Activated B cell treated with CpG ODN at 0.5 μM for 24 hours (primary cell): ENCODE measurements at regions of chr14 and their contacts with region 1.

Region 1: DNA sequence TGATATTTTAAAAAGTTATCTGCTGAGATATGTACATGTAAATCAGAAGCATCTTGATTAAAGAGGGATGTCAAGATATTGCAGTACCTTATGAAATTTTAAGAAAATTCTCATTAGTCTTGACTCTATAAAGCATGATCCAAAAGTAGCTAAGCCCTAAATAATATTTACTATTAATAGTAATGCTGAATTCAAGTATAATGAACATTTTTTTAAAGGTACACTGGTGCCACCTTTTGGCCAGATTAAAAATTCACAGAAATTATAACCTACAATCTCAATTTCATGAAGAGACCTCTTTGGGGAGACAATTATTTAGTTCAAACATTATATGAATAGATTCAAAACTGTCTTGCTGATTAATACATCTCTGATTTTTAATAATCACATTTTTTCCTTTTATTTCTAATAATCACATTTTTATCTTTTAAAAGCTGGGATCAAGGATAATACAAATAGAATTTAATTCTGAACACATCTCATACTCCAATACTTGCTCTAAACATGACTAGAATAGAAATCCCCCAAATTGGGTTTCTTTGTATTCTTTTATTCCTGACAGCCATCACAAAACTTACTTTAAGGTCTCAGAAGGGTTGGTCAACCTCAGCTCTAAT is 13.4 kb downstream of the AKAP5 start:
- DNase-seq: no peak
- ATAC-seq: no peak
- H3K4me3 Mint-ChIP-seq: no peak overlapping the region
- H3K27ac Mint-ChIP-seq: no peak overlapping the region
- H3K4me1 Mint-ChIP-seq: peaks cover 4% of the 10 kb centered on the region
- H3K27me3 Mint-ChIP-seq: no peaks in the 10 kb centered on the region
- CTCF ChIP-seq: peak; percentile 23

Region 2: GRCh38 chr14:64159588-64159987 is 319.2 kb before region 1 on chr14:
- CTCF ChIA-PET with region 1: no interaction called
- POLR2A ChIA-PET with region 1: no interaction called
- intact Hi-C with region 1: loop called (anchors 10 kb)
- DNase-seq: no peak
- ATAC-seq: peak; percentile 47
- H3K4me3 Mint-ChIP-seq: no peak overlapping the region
- H3K27ac Mint-ChIP-seq: no peak overlapping the region
- H3K4me1 Mint-ChIP-seq: peaks cover 6% of the 10 kb centered on the region
- H3K27me3 Mint-ChIP-seq: no peaks in the 10 kb centered on the region
- CTCF ChIP-seq: no peak

Region 3: DNA sequence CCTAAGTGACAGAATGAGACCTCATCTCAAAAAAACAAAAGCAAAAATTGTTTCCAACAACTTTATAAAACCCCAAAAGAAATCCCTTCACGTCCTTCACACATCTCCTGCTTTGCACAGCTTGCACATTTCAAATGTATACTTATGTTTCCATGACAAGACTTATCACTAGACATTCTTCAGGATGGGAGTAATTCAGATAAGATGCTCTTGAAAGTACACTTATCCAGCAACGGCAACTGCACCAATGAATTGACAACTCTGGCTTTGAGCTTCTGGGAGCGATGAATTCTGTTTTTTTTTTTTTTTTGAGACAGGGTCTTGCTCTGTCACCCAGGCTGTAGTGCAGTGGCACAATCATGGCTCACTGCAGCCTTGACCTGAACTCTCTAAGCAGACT is 44.2 kb before region 1 on chr14:
- CTCF ChIA-PET with region 1: interaction called, 148 read pairs
- POLR2A ChIA-PET with region 1: no interaction called
- intact Hi-C with region 1: loop called (anchors 1 kb)
- DNase-seq: no peak
- ATAC-seq: no peak
- H3K4me3 Mint-ChIP-seq: no peak overlapping the region
- H3K27ac Mint-ChIP-seq: no peak overlapping the region
- H3K4me1 Mint-ChIP-seq: no peaks in the 10 kb centered on the region
- H3K27me3 Mint-ChIP-seq: no peaks in the 10 kb centered on the region
- CTCF ChIP-seq: no peak

Region 4: DNA sequence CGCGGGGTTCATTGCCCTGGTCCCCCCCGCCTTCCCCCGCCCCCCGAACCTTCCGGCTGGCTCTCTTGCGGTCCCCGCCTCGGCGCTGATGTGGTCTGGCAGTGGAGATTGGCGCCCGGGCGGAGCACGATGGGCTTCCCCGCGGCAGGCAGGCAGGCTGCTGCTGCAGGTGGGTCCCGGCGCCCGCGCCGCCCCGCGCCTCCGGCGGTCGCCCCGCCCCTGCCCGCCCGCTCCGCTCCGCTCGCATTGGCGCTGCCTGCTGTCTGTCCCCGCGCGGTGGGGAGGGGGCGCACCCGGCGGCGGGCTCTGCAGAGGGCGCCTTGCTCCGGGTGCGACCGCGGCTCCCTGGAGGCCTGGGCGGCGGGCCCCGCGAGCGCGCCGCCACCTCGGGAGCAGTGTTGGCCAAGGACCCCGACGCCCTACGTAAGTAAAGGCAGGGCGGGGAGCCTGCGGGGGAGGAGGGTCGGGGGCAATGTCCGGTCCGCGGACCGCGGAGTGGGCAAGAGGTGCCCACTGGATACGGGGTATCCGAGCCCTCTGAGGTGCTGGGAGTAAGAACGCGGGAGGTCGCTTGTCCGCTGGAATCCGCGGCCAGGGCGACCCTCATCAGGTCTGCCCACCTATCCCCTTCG is 13.4 kb before region 1 on chr14 and contains the start of gene AKAP5:
- CTCF ChIA-PET with region 1: interaction called, 14 read pairs
- POLR2A ChIA-PET with region 1: interaction called, 6 read pairs
- intact Hi-C with region 1: no loop called
- DNase-seq: peak; percentile 67
- ATAC-seq: peak; percentile 91
- H3K4me3 Mint-ChIP-seq: peak within 1 kb of the TSS; percentile 86
- H3K27ac Mint-ChIP-seq: peak within 1 kb of the TSS; percentile 80
- H3K4me1 Mint-ChIP-seq: peaks cover 51% of the 10 kb centered on the region
- H3K27me3 Mint-ChIP-seq: no peaks in the 10 kb centered on the region
- CTCF ChIP-seq: no peak
- total RNA-seq, gene AKAP5: 4.3 and 5.1 TPM in 2 replicates

Region 5: DNA sequence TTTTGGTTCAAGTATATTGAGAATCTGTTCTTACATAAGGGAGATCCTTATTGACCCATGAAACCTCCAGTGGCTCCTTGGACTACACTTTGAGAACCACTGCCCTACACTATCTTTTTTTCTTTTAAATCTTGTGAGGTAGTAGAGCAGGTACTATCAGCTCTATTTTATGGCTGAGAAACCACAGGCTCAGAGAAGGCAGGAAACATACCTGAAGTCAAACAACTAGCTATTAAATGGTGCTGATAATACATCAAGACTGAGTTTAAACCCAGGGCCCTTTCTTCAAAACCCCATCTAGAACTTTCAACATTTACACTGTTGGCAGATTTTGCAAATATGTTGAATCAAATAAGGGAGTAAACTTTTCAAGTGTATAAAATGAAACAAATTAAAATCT is 18.0 kb after region 1 on chr14:
- CTCF ChIA-PET with region 1: interaction called, 11 read pairs
- POLR2A ChIA-PET with region 1: interaction called, 4 read pairs
- intact Hi-C with region 1: no loop called
- DNase-seq: no peak
- ATAC-seq: no peak
- H3K4me3 Mint-ChIP-seq: no peak overlapping the region
- H3K27ac Mint-ChIP-seq: no peak overlapping the region
- H3K4me1 Mint-ChIP-seq: peaks cover 36% of the 10 kb centered on the region
- H3K27me3 Mint-ChIP-seq: no peaks in the 10 kb centered on the region
- CTCF ChIP-seq: no peak

Region 6: DNA sequence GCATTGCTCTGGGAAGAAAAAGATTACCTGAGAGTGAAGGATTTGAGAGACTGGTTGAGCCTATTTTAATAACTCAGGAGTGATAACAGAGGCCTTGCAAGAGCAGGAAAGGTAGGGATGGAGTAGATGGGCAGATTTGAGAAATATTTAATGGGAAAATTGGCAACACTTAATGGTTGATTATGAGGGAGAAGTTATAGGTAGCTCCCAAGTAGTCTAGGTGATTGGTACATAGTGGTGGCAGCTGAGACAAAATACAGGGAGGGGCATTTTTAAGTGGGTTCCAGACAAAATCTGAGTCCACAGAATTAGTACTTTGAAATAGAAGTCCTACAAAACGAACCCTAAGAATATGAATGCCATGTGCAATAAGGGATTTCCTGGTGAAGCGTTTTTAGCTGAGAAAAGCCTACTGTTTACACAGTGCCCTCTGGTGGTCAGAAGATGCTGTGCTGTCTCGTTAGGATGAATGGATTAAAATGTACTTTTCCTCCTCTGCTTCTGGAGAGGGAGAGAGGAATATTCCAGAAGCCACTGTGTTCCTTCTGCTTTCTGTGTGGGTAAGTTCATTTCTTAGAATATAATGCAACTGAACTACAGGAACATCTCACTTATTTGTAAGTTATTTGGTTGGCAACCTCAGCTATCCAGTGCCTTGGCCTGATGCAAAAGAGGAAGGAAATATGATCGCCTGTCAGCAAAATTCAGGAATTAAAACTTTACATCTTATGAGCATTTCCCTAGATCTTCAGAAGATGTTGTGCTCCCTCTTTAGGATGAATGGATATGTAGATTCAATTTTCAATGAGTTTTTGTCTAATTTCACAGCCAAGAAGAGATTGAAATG is 32.3 kb after region 1 on chr14:
- CTCF ChIA-PET with region 1: interaction called, 18 read pairs
- POLR2A ChIA-PET with region 1: interaction called, 5 read pairs
- intact Hi-C with region 1: loop called (anchors 1 kb)
- DNase-seq: no peak
- ATAC-seq: peak; percentile 36
- H3K4me3 Mint-ChIP-seq: peak overlapping the region; percentile 1
- H3K27ac Mint-ChIP-seq: peak overlapping the region; percentile 51
- H3K4me1 Mint-ChIP-seq: peaks cover 86% of the 10 kb centered on the region
- H3K27me3 Mint-ChIP-seq: no peaks in the 10 kb centered on the region
- CTCF ChIP-seq: peak; percentile 88

Region 7: GRCh38 chr14:64636208-64636979 is 157.7 kb after region 1 on chr14:
- CTCF ChIA-PET with region 1: interaction called, 12 read pairs
- POLR2A ChIA-PET with region 1: no interaction called
- intact Hi-C with region 1: loop called (anchors 1 kb)
- DNase-seq: peak; percentile 54
- ATAC-seq: peak; percentile 93
- H3K4me3 Mint-ChIP-seq: no peak overlapping the region
- H3K27ac Mint-ChIP-seq: no peak overlapping the region
- H3K4me1 Mint-ChIP-seq: peaks cover 7% of the 10 kb centered on the region
- H3K27me3 Mint-ChIP-seq: no peaks in the 10 kb centered on the region
- CTCF ChIP-seq: peak; percentile 32

Region 8: DNA sequence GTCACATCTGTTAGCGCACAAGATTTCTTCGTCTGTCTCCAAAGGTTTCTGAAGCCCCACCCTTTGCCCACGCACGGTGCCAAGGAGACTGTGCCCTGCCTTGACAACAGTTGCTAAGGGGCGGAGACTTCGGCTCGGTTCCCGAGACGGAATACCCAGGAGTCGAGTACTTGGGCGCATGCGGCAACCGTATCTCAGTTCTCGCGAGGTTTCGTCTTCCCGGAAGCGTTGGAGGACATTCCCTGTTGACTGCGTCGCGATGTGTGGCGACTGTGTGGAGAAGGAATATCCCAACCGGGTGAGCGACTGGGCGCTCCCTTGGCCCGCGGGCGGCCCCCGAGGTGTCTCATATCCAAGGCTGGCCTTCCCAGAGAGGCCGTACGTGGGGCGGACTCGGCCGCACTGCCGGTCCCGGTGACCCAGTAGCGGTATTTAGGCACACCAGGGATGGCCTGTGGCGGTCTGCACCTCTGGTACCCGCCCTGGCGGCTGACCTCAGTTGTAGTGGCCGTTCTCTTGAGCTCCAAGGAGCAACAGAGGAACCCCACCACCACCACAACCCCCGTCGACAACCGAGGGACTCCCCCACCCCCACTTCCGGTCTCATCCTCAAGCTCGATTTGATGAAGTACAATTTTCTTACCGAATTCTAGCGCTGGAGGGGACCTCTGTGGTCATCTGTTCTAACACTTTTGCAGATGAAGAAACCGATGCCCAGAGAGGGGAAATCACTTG is 435.7 kb after region 1 on chr14 and contains the start of gene CHURC1:
- CTCF ChIA-PET with region 1: no interaction called
- POLR2A ChIA-PET with region 1: no interaction called
- intact Hi-C with region 1: no loop called
- DNase-seq: peak; percentile 89
- ATAC-seq: peak; percentile 98
- H3K4me3 Mint-ChIP-seq: peak within 1 kb of the TSS; percentile 92
- H3K27ac Mint-ChIP-seq: peak within 1 kb of the TSS; percentile 88
- H3K4me1 Mint-ChIP-seq: peaks cover 43% of the 10 kb centered on the region
- H3K27me3 Mint-ChIP-seq: peaks cover 3% of the 10 kb centered on the region
- CTCF ChIP-seq: no peak
- total RNA-seq, gene CHURC1: 69.6 and 83.8 TPM in 2 replicates